ENCODE measurements at regions of chr16 and their contacts with region 1.

Region 1: DNA sequence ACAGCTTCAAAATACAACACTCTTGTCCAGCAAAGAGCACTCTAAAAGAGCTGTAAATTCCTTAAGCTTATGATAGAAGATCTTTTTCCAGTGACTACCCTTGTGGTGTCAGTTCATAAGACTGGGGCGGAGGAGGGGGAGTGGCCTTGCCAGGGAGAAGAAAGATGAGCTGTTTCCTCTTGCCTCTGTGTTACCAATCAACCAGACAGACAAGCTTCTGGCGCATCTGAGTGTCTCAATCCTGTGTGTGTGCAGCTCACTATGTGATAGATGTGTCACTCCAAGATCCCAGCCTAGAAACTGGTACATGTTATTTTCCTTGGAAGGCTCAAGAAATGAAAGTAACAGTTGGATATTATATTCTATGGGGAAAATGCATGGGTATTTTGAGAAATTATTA is 167.4 kb upstream of the CACNG3 start:
- DNase-seq: no peak
- ATAC-seq: no peak
- H3K4me3 Mint-ChIP-seq: no peak overlapping the region
- H3K27ac Mint-ChIP-seq: no peak overlapping the region
- H3K4me1 Mint-ChIP-seq: peaks cover 16% of the 10 kb centered on the region
- H3K27me3 Mint-ChIP-seq: no peaks in the 10 kb centered on the region

Region 2: DNA sequence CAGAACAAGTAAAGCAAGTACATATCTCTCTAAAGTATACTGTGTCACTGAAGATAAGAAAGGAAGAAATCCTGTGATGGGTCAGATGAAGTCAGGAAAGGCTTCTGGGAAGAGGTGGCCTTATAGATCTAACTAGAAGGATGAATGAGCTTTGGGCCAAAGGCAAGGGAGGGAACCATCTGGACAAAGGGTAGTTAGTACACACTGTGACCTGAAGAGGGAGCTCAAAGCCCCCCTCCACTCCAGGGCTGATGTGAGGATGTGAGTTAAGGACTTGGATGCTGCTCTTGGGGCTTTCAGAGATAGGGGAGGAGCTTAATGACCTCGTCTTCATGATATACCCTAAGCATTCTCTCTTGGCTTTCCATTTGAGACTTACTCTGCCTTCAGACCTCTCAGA is 17.9 kb before region 1 on chr16:
- CTCF ChIA-PET with region 1: interaction called, 12 read pairs
- POLR2A ChIA-PET with region 1: no interaction called
- DNase-seq: peak; percentile 47
- ATAC-seq: peak; percentile 81
- H3K4me3 Mint-ChIP-seq: no peak overlapping the region
- H3K27ac Mint-ChIP-seq: no peak overlapping the region
- H3K4me1 Mint-ChIP-seq: peaks cover 25% of the 10 kb centered on the region
- H3K27me3 Mint-ChIP-seq: no peaks in the 10 kb centered on the region